Ovary (tissue), 10 donors: ENCODE measurements at regions of chr5 and their contacts with region 1.

Region 1: DNA sequence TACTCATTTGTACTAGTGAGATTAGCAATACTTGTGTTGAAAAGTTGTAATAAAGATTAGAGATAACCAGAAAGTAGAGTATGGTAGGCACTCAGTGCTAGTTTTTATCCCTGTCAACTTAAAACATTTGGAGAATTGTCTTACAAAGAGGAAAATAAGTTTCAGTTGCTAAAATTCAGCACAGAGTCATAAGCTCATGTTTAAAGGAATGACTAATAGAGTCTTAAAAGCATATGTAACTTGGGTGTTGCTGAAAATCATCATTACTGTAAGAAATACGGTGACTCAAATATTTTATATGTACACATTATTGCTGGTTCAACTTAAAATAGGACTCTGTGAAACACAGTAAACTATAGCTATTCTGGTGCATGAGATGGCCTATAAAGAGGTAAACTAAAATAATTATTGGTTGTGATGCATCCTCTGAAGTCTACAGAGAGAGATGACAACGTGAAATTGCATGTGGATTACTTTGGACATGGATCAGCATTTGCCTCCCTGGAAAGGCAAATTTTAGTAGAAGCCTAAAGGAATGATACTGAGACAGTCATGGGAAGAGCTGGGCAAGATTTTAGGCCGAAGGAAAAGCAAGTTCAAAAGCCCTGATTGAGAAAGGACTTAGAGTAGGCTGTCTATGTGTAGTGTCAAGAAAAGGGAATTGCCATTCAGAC is 34.6 kb downstream of the SGCD start:
- DNase-seq: no peak
- H3K4me3 ChIP-seq: no peak overlapping the region
- H3K27ac ChIP-seq: no peak overlapping the region
- H3K4me1 ChIP-seq: no peaks in the 10 kb centered on the region
- H3K27me3 ChIP-seq: no peaks in the 10 kb centered on the region
- CTCF ChIP-seq: no peak
- EP300 ChIP-seq: no peak
- POLR2A ChIP-seq: no peak

Region 2: DNA sequence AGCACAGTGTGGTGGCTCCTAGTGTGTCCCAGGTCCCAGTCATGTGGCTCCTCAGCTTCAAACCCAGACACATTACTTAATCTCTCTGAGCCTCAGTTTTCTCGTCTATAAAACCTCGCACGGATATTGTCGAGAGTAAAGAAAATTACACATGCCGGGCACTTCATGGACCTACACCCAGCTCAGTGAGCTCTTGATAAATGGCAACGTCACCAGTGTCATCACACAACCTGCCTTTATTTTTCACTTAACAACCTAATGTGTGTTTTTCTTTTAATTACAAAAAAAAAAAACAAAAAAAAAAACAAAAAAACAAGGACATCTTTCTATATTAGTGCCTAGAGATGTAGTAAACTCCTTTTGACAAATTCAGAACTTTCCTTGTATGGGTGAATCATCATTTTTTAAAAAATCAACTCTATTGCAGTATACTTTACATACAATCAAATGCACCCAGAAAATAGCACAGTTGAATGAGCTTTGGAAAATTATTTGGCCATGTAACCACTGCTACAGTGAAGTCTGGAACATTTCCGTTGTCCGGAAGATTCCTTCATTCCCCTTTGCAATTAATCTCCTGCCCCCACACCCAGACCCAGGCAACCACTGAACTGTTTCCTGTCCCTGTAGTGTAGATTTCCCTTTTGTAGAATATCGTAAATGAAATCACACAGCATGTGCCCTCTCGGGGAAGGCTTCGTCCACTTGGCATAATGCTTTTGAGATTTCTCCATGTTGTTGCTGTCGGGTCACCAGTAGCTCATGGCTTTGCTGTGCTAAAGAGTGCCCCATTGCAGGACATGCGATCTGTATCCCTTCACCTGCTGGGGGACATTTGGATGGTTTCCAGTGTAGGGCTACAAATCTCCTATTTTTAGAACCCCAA is 1706.8 kb before region 1 on chr5:
- intact Hi-C with region 1: loop called in 1 of 4 experiments (anchors 5 kb)
- DNase-seq: no peak
- H3K4me3 ChIP-seq: peak overlapping the region; percentile 20
- H3K27ac ChIP-seq: peak overlapping the region in 1 of 2 donors; percentile 50
- H3K4me1 ChIP-seq: peaks cover 8% of the 10 kb centered on the region
- H3K27me3 ChIP-seq: no peaks in the 10 kb centered on the region
- CTCF ChIP-seq: no peak
- EP300 ChIP-seq: no peak
- POLR2A ChIP-seq: no peak